B cell (primary cell): ENCODE measurements at regions of chr3 and their contacts with region 1.

Region 1: GRCh38 chr3:68088216-68088615 is 433.8 kb upstream of the SUCLG2 start:
- DNase-seq: no peak
- ATAC-seq: no peak
- H3K4me3 ChIP-seq: no peak overlapping the region
- H3K4me3 Mint-ChIP-seq: no peak overlapping the region
- H3K27ac ChIP-seq: no peak overlapping the region
- H3K27ac Mint-ChIP-seq: no peak overlapping the region
- H3K4me1 ChIP-seq: no peaks in the 10 kb centered on the region
- H3K4me1 Mint-ChIP-seq: no peaks in the 10 kb centered on the region
- H3K27me3 ChIP-seq: no peaks in the 10 kb centered on the region
- H3K27me3 Mint-ChIP-seq: no peaks in the 10 kb centered on the region
- CTCF ChIP-seq: no peak

Region 2: DNA sequence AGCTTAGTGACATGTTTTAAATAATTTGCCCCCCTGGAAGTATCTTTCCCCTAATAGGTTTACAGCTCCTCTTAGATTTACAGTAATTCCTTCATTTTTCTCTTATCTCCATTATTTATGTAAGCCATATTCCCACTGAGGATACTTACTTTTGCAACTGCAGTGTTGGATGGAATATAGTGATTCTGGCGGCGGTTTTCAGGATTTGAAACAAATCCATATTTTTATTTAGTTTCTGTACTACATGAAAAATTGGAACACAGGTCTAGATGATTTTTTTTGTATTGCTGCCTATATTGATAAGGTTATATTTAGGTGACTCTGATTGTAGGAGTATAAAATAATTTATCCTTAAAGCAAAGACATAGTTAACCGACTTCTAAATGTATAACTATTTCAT is 42.2 kb before region 1 on chr3:
- CTCF ChIA-PET with region 1: no interaction called
- POLR2A ChIA-PET with region 1: no interaction called
- intact Hi-C with region 1: loop called (anchors 1 kb)
- DNase-seq: no peak
- ATAC-seq: no peak
- H3K4me3 ChIP-seq: no peak overlapping the region
- H3K4me3 Mint-ChIP-seq: no peak overlapping the region
- H3K27ac ChIP-seq: no peak overlapping the region
- H3K27ac Mint-ChIP-seq: no peak overlapping the region
- H3K4me1 ChIP-seq: no peaks in the 10 kb centered on the region
- H3K4me1 Mint-ChIP-seq: no peaks in the 10 kb centered on the region
- H3K27me3 ChIP-seq: no peaks in the 10 kb centered on the region
- H3K27me3 Mint-ChIP-seq: no peaks in the 10 kb centered on the region
- CTCF ChIP-seq: no peak